Activated CD4-positive, alpha-beta T cell treated with anti-CD3 and anti-CD28 coated beads for 36 hours (primary cell): ENCODE measurements at regions of chr14 and their contacts with region 1.

Region 1: GRCh38 chr14:50311975-50312733 is at the starts of genes DMAC2L and L2HGDH:
- DNase-seq: peak; percentile 93
- ATAC-seq: peak; percentile 95
- H3K4me3 Mint-ChIP-seq: peak within 1 kb of the TSS; percentile 85
- H3K27ac Mint-ChIP-seq: peak within 1 kb of the TSS; percentile 95
- H3K4me1 Mint-ChIP-seq: peaks cover 41% of the 10 kb centered on the region
- H3K27me3 Mint-ChIP-seq: no peaks in the 10 kb centered on the region
- total RNA-seq, gene DMAC2L: 7.4 to 12.6 TPM
- total RNA-seq, gene L2HGDH: 12.8 to 19.0 TPM

Region 2: DNA sequence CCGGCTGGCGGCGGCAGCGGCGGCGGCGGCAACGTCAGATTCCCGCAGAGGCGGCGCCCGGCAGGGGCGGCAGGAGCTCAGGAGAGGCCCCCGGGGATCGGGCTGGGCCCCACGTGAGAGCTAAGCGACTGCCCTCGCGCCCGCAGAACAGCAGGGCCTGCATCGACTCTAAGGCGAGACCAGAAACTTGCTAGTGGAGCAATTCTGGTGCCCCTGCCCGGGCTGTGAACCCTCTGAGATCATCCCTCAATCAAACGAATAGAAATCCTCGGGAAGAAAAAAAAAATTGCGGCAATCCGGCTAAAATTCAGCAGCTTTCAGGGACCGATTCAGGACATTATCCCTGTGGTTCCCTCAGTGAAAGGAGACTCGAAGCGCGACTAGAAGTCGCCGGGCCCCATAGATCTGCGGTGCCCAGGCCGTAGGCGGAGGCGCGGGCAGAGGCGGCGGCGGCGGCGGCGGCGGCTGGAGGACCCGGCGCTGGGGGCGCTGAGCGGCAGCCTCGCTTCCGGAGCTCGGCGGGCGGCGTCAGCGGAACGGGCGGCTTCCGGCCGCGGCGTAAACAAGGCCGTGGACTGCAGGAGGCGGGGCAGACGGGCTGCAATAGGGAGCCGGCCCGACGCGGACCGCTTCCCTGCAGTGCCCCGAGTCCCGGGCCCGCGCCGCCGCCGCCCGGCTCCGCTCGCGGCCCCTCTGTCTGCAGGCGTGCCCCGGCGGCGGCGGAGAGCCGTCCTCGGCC is 544.4 kb before region 1 on chr14 and contains the start of gene KLHDC2:
- CTCF ChIA-PET with region 1: no interaction called
- POLR2A ChIA-PET with region 1: interaction called, 4 read pairs
- intact Hi-C with region 1: loop called in 1 of 2 experiments (anchors 2 kb)
- DNase-seq: peak; percentile 94
- ATAC-seq: peak; percentile 79
- H3K4me3 Mint-ChIP-seq: peak within 1 kb of the TSS; percentile 96
- H3K27ac Mint-ChIP-seq: peak within 1 kb of the TSS; percentile 99
- H3K4me1 Mint-ChIP-seq: peaks cover 30% of the 10 kb centered on the region
- H3K27me3 Mint-ChIP-seq: no peaks in the 10 kb centered on the region
- total RNA-seq, gene KLHDC2: 16.0 to 22.4 TPM

Region 3: DNA sequence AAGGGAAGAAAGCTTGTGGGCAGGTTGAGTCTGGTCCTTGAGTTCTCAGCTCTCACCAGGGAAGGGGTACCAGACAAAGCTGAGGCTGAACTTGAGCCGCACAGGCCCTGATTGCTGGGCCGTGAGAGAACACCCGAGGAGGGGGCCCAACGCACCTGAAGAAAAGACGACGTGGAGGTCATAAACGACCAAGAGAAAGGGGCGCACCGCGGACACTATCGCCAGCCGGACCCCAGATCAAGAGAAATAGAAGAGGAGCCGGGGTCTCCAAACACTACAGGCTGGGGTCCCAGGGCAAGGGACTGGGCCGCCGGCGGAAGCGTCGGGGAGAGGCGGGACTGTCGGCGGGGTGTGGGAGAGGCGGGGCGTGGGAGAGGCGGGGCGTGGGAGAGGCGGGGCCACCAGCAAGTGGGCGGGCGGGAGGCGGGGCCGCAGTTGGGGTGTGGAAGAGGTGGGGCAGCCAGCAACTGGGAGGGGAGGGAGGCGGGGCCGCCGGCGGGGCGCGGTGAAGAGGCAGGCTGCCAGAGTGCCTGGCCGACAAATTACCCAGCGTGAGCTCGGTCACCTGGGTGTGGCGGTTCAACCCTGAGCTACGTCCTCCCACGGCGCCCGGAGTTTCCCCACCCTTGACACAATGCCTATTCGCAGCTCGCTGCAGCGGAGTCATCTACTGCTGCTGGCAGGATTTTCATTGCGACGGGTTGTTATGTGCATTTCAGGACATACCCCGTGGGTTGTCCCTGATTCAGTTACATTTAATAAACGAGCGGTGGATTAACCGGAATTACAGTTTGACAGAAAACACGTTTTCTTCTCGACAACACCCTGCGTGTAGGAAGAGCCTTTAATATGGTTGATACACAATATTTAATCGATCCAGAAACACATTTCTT is 444.1 kb before region 1 on chr14:
- CTCF ChIA-PET with region 1: interaction called, 4 read pairs
- POLR2A ChIA-PET with region 1: interaction called, 4 read pairs
- intact Hi-C with region 1: loop called in 1 of 2 experiments (anchors 1 kb)
- DNase-seq: peak; percentile 100
- ATAC-seq: peak; percentile 87
- H3K4me3 Mint-ChIP-seq: peak overlapping the region; percentile 98
- H3K27ac Mint-ChIP-seq: peak overlapping the region; percentile 96
- H3K4me1 Mint-ChIP-seq: peaks cover 22% of the 10 kb centered on the region
- H3K27me3 Mint-ChIP-seq: no peaks in the 10 kb centered on the region

Region 4: DNA sequence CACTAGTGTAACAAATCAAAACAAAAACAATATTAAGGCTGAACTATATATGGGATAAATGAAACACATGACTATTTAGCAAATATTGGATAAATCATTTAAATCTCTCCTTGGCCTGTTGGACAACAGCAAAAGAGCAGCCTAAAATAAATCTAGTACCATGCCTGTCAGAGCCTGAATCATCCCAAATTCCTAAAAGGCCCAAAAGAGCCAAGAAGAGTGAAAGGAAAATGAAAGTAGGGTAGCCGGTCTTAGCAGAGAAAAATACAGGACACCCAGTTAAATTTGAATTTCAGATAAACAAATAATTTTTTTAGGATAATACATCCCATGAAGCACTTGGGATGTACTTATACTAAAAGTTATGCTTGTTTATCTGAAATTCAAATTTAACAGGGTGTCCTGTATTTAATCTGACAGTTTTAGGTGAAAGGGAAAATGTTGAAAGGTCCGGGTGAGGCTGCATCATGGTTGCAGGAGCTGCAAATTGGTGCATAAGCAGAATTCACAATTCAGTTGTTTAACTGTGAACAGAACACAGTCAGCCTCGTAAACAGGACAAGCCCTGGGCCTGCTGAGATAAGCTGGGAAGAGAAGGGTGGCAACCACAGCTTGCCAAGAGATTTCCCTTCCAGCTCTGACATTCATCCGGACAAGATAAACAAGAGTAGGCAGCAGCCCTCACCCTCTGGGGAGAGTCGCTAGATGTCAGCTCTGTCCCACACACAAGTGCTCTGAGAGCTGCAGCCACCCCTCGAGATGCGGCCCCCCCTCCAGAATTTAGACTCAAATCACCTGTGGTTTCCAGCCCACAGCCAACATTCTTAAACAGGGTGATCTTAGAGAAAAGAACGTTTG is 30.3 kb after region 1 on chr14:
- CTCF ChIA-PET with region 1: interaction called, 13 read pairs
- POLR2A ChIA-PET with region 1: no interaction called
- intact Hi-C with region 1: no loop called
- DNase-seq: peak; percentile 76
- ATAC-seq: no peak
- H3K4me3 Mint-ChIP-seq: no peak overlapping the region
- H3K27ac Mint-ChIP-seq: no peak overlapping the region
- H3K4me1 Mint-ChIP-seq: peaks cover 30% of the 10 kb centered on the region
- H3K27me3 Mint-ChIP-seq: peaks cover 3% of the 10 kb centered on the region

Region 5: GRCh38 chr14:50532502-50533240 is 220.5 kb after region 1 on chr14 and contains the start of gene MAP4K5:
- CTCF ChIA-PET with region 1: interaction called, 4 read pairs
- POLR2A ChIA-PET with region 1: no interaction called
- intact Hi-C with region 1: loop called in 1 of 2 experiments (anchors 1 kb)
- DNase-seq: peak; percentile 94
- ATAC-seq: peak; percentile 96
- H3K4me3 Mint-ChIP-seq: peak within 1 kb of the TSS; percentile 90
- H3K27ac Mint-ChIP-seq: peak within 1 kb of the TSS; percentile 86
- H3K4me1 Mint-ChIP-seq: peaks cover 47% of the 10 kb centered on the region
- H3K27me3 Mint-ChIP-seq: no peaks in the 10 kb centered on the region
- total RNA-seq, gene MAP4K5: 19.1 to 31.2 TPM